ENCODE measurements at regions of chr17 and their contacts with region 1.

Region 1: DNA sequence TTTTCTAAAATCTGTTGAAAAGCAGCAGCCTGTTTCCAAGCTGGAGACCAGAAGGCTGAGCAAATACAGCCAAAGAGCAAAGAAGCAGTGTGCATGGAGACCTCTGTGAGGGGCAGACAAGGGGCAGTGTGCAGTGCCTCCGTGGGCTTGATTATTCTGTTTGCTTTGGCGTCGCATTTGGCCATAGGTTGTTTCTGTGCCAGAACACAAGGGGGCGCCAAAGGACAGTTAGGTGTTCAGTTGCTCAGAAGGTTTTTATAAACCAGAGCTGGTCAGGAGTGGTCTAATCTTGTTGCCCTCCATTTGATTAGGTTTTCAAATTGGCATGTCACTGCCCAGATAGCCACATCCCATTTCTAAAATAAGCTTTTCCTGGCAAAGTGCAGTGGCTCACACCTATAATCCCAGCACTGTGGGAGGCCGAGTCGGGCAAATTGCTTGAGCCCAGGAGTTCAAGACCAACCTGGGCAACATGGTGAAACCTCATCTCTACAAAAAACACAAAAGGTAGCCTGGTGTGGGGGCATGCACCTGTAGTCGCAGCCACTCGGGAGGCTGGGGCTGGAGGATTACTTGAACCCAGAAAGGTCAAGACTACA is 10.6 kb downstream of the MYH3 start:
- DNase-seq: peak; percentile 87
- ATAC-seq: peak; percentile 63
- H3K4me3 Mint-ChIP-seq: no peak overlapping the region
- H3K27ac Mint-ChIP-seq: no peak overlapping the region
- H3K4me1 Mint-ChIP-seq: no peaks in the 10 kb centered on the region
- H3K27me3 Mint-ChIP-seq: no peaks in the 10 kb centered on the region

Region 2: DNA sequence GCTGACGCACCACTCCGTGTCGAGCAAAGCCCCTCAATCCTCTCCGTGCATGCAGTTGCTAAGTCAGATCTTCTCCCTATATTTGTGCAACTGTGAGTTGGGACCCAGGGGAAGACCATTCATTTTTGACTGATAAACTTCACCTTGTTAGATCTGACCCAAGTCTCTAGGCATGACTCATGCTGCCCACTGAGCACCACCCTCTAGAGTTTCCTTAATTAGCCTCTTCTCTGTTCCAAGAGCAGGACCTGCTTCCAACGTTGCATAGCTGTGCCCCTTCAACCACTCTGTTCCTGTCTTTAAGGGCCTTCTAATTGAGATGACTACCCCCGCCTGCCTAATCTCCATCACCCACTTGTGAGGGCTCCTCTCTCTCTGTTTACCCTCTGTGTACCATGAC is 276.3 kb before region 1 on chr17:
- CTCF ChIA-PET with region 1: no interaction called
- POLR2A ChIA-PET with region 1: no interaction called
- intact Hi-C with region 1: no loop called
- DNase-seq: no peak
- ATAC-seq: no peak
- H3K4me3 Mint-ChIP-seq: no peak overlapping the region
- H3K27ac Mint-ChIP-seq: no peak overlapping the region
- H3K4me1 Mint-ChIP-seq: no peaks in the 10 kb centered on the region
- H3K27me3 Mint-ChIP-seq: peaks cover 12% of the 10 kb centered on the region

Region 3: GRCh38 chr17:10631048-10631700 is 15.3 kb before region 1 on chr17:
- CTCF ChIA-PET with region 1: interaction called, 42 read pairs
- POLR2A ChIA-PET with region 1: no interaction called
- intact Hi-C with region 1: no loop called
- DNase-seq: peak; percentile 45
- ATAC-seq: no peak
- H3K4me3 Mint-ChIP-seq: no peak overlapping the region
- H3K27ac Mint-ChIP-seq: no peak overlapping the region
- H3K4me1 Mint-ChIP-seq: peaks cover 2% of the 10 kb centered on the region
- H3K27me3 Mint-ChIP-seq: no peaks in the 10 kb centered on the region

Region 4: GRCh38 chr17:10683853-10684252 is 37.4 kb after region 1 on chr17:
- CTCF ChIA-PET with region 1: interaction called, 20 read pairs
- POLR2A ChIA-PET with region 1: no interaction called
- intact Hi-C with region 1: loop called in 1 of 2 experiments (anchors 2 kb)
- DNase-seq: no peak
- ATAC-seq: no peak
- H3K4me3 Mint-ChIP-seq: no peak overlapping the region
- H3K27ac Mint-ChIP-seq: no peak overlapping the region
- H3K4me1 Mint-ChIP-seq: peaks cover 6% of the 10 kb centered on the region
- H3K27me3 Mint-ChIP-seq: no peaks in the 10 kb centered on the region

Region 5: DNA sequence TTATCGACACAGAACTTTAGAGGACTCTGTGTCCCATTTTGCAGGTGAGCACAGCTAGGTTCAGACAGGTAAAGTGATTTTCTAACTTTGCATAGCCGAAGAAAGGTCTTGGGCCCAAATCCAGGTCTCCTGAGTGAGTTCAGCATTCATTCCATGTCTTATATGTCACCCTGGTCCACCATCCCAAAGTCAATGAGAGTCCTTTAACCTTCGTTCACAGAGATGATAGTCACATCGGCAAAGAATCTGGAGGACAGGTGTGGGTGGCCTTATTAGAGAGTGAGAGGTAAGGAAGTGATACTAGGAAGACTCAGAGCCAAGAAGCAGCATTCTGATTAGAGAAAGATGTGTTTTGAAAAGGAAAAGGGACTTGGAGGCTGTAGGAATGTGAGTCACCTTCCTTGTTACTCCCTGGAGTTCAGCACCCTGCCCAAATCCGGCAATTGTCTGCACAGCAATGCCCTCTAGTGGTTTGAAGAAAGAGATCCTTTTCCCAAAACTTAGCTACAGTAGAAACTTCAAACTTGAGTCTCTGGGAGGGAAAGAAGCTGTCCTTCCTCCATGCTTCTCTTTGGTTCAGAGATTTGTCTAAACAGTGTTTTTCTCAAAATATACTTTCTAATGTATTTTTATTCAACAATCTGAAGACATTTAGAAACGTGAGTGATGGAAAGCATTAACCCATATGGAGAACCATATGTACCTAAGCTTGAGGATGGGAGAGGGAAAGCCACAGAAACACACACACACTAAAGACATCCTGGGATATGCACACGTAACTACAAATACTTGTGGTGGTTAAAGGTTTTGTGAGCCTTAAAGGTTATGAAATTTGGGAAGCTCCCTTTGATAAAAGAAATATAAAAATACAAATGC is 498.1 kb after region 1 on chr17:
- CTCF ChIA-PET with region 1: interaction called, 4 read pairs
- POLR2A ChIA-PET with region 1: no interaction called
- intact Hi-C with region 1: loop called in 1 of 2 experiments (anchors 5 kb)
- DNase-seq: peak; percentile 20
- ATAC-seq: no peak
- H3K4me3 Mint-ChIP-seq: no peak overlapping the region
- H3K27ac Mint-ChIP-seq: no peak overlapping the region
- H3K4me1 Mint-ChIP-seq: no peaks in the 10 kb centered on the region
- H3K27me3 Mint-ChIP-seq: peaks cover 2% of the 10 kb centered on the region

Measured in activated CD4-positive, alpha-beta T cell treated with anti-CD3 and anti-CD28 coated beads for 36 hours (primary cell).